ENCODE measurements at regions of chr14 and their contacts with region 1.

Region 1: DNA sequence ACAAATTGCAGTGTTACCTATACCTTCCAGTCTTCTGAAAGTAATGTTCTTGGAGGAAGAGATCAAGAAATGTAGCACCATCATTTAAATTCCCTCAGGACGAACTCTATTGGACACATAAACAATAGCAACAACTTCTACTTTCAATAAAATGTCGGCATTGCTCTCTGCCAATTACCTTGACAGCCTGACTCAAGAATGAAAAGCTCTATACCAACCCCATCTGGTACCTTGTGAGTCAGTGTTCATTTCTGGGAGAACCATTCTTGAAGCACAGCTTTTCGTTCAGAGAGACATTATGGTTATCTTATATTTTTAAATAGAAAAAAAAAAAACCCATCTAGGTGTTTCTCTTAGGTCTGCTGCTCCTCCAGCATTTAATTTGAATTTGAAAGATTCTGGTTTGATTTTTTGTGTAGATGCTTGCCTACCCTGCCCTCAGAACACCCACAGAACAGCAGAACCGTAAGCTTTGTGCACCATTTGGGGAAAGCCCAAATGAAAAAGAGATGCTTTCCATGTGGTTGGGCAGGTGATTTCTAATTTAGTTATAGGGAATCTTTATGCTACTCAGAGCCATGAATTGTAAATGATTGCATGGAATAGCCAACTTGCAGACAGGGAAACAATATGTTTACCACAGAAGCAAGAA is 156.0 kb downstream of the SAMD4A start:
- DNase-seq: peak; percentile 42
- ATAC-seq: peak; percentile 79
- H3K4me3 Mint-ChIP-seq: no peak overlapping the region
- H3K27ac Mint-ChIP-seq: no peak overlapping the region
- H3K4me1 Mint-ChIP-seq: peaks cover 29% of the 10 kb centered on the region
- H3K27me3 Mint-ChIP-seq: peaks cover 5% of the 10 kb centered on the region

Region 2: GRCh38 chr14:54487771-54488170 is 235.1 kb before region 1 on chr14:
- CTCF ChIA-PET with region 1: no interaction called
- POLR2A ChIA-PET with region 1: no interaction called
- DNase-seq: no peak
- ATAC-seq: no peak
- H3K4me3 Mint-ChIP-seq: peak overlapping the region; percentile 95
- H3K27ac Mint-ChIP-seq: peak overlapping the region; percentile 74
- H3K4me1 Mint-ChIP-seq: peaks cover 58% of the 10 kb centered on the region
- H3K27me3 Mint-ChIP-seq: no peaks in the 10 kb centered on the region

Region 3: DNA sequence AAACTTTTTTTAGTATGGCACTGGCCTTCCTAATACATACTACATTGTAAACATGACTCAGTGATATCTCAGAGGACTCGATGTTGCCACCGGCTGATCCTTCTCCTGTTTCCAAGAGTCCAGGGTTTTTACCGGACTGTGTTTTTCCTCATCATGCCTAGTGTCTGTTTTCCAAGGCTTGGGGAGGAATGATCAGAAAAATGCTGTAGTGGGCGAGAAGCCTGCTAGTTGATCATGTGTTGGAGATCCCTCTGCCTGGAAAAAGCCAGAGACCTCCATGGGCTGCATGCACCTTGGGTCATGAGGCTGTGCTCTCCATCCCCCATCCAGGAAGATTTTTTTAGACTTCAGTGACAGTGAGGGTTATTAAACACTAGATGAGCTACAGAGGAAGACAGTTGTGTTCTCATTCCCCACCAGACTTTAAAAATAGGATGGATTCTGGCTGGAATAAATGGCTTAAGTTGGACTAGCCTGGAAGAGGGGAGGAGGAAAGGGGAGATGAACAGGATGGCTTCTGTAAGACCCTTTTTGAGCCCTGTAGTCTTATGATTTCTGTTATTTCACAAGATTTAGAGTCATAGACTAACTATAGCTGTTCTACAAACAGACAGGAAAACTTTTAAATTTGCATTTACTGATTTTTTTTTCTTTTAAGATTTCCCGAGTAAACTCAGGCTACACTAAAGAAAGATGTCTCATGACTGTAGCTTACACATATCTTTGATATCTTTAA is 10.3 kb before region 1 on chr14:
- CTCF ChIA-PET with region 1: interaction called, 25 read pairs
- POLR2A ChIA-PET with region 1: interaction called, 4 read pairs
- DNase-seq: no peak
- ATAC-seq: no peak
- H3K4me3 Mint-ChIP-seq: peak overlapping the region; percentile 40
- H3K27ac Mint-ChIP-seq: peak overlapping the region; percentile 75
- H3K4me1 Mint-ChIP-seq: peaks cover 27% of the 10 kb centered on the region
- H3K27me3 Mint-ChIP-seq: peaks cover 10% of the 10 kb centered on the region

Region 4: DNA sequence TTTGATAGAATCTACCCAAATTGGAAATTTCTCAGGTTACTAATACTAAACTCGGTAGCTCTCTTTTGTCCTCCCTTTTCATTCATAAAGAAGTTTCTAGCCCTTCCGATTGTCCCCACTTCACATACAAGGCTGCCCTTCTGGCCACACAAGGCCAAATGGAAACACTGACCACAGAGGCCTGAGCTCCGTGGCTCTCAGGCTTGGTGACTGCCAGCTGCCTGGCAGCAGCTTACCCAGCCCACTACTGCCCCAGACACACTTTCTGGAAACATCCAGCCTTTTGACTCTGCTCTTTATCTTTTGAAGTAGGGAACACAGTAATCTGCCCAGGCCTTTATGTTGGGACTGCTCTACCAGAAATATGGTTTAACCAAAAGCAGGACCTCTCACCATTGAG is 12.5 kb after region 1 on chr14:
- CTCF ChIA-PET with region 1: interaction called, 10 read pairs
- POLR2A ChIA-PET with region 1: no interaction called
- DNase-seq: no peak
- ATAC-seq: no peak
- H3K4me3 Mint-ChIP-seq: no peak overlapping the region
- H3K27ac Mint-ChIP-seq: no peak overlapping the region
- H3K4me1 Mint-ChIP-seq: peaks cover 82% of the 10 kb centered on the region
- H3K27me3 Mint-ChIP-seq: no peaks in the 10 kb centered on the region

Region 5: DNA sequence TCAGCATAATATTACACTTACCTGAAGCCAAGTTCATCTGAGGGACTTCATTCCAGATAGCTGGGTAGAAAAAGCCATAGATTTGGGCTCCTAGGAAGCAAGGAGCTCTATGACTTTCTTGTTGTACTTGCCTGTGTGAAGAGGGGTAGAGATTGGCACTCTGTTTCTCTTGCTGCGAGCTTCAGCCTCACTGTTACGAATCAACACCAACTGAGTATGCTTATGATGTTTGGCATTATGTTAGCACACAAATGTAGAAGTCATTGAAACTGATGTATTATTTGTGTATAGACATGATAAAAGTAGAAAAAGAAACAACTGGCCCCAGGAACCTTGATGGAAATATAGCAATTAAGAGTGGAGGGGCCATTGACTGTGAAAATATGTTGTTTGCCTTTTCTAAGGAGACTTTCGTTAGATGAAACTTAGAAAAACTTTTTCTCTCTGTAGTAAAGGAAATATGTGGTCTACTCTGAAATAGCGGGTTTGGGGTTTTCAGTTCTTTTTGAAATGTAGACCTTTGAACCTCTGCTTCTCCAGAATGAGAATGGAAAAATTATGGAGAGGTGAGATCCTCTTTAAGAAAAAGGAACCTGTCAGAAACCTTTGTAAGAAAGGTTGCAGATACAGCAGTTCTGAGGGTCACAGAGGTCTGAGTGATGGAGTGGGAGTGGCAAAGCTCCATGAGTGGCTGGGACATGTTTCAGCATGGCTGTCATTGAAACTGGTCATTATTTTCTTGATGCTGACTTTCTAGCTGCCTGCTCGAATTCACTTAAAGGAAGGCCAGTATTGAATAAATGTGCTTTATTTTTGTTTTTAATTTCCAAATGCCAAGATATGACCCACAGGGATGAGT is 19.8 kb after region 1 on chr14:
- CTCF ChIA-PET with region 1: interaction called, 10 read pairs
- POLR2A ChIA-PET with region 1: interaction called, 3 read pairs
- DNase-seq: no peak
- ATAC-seq: peak; percentile 70
- H3K4me3 Mint-ChIP-seq: peak overlapping the region; percentile 38
- H3K27ac Mint-ChIP-seq: peak overlapping the region; percentile 84
- H3K4me1 Mint-ChIP-seq: peaks cover 72% of the 10 kb centered on the region
- H3K27me3 Mint-ChIP-seq: peaks cover 3% of the 10 kb centered on the region

Region 6: GRCh38 chr14:54805521-54806322 is 82.8 kb after region 1 on chr14:
- CTCF ChIA-PET with region 1: no interaction called
- POLR2A ChIA-PET with region 1: no interaction called
- DNase-seq: peak; percentile 83
- ATAC-seq: peak; percentile 92
- H3K4me3 Mint-ChIP-seq: no peak overlapping the region
- H3K27ac Mint-ChIP-seq: no peak overlapping the region
- H3K4me1 Mint-ChIP-seq: peaks cover 5% of the 10 kb centered on the region
- H3K27me3 Mint-ChIP-seq: peaks cover 29% of the 10 kb centered on the region

Measured in activated CD8-positive, alpha-beta T cell treated with anti-CD3 and anti-CD28 coated beads, Interleukin-2, amount 10 ng/mL, durations not matched to agents 7 days and 5 days (primary cell).